PC-3 (cell line): ENCODE measurements at regions of chr10 and their contacts with region 1.

Region 1: DNA sequence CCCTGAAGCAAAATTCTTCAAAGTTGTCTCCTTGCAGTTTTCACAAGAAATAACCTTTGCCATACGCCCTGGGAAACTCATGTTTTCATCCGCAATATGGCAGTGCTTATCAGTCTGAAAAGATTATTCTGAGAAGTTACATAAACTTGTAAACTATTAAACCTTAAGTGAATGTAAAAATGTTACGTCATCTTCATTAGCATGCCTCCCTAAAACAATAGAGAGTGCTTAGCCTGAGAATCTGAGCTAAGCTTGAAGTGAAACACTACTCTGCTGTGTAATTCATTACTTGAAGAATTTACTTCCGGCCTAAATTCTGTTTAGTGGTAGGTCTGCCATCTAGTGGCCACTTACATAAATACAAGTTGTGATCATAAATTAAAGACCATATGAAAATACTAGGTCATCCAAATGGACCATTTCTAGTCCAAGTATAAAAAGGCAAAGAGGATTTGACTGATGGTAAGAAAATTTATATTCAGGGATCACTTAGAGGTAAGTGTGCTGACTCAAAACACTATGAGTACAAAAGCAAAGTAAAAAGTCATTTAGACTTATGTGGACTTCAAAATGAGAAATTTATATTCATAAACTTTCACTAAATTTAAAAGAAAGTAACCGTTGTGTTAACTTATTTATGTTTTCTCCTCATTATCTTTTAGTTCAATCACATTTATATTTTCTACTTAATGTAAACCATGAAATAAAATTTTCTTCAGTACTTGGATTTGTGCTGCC is 745.1 kb upstream of the LRRTM3 start:
- DNase-seq: peak; percentile 93
- ATAC-seq: peak; percentile 74
- H3K4me3 ChIP-seq: no peak overlapping the region
- H3K27ac ChIP-seq: no peak overlapping the region
- H3K4me1 ChIP-seq: no peaks in the 10 kb centered on the region
- H3K27me3 ChIP-seq: no peaks in the 10 kb centered on the region
- CTCF ChIP-seq: peak; percentile 95

Region 2: DNA sequence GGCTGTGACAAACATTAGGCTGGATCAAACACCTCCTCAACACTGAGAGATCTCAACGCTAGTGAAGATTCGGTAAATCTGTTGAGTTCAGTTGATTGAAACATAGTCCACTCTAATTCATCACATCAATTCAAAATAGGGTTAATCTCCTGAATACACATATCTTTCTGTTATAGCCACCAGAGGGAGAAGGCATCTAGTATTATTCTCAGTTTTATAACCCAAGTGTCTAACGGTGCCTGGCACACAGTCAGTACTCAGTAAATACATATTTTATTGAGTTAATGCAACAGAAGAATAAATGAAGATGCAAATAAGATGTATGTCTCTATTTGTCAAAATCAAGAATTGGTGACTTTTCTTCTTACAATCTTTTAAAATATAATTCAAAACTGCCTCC is 68.7 kb before region 1 on chr10:
- CTCF ChIA-PET with region 1: no interaction called
- POLR2A ChIA-PET with region 1: no interaction called
- intact Hi-C with region 1: loop called (anchors 2 kb)
- DNase-seq: peak; percentile 33
- ATAC-seq: peak; percentile 43
- H3K4me3 ChIP-seq: no peak overlapping the region
- H3K27ac ChIP-seq: no peak overlapping the region
- H3K4me1 ChIP-seq: no peaks in the 10 kb centered on the region
- H3K27me3 ChIP-seq: no peaks in the 10 kb centered on the region
- CTCF ChIP-seq: peak; percentile 59

Region 3: GRCh38 chr10:66144016-66144415 is 36.7 kb before region 1 on chr10:
- CTCF ChIA-PET with region 1: no interaction called
- POLR2A ChIA-PET with region 1: no interaction called
- intact Hi-C with region 1: no loop called
- DNase-seq: no peak
- ATAC-seq: no peak
- H3K4me3 ChIP-seq: no peak overlapping the region
- H3K27ac ChIP-seq: no peak overlapping the region
- H3K4me1 ChIP-seq: no peaks in the 10 kb centered on the region
- H3K27me3 ChIP-seq: no peaks in the 10 kb centered on the region
- CTCF ChIP-seq: no peak